Pancreas (tissue), 10 donors: ENCODE measurements at regions of chr4 and their contacts with region 1.

Region 1: GRCh38 chr4:69896530-69897116 is 34.2 kb upstream of the CSN1S1 start:
- DNase-seq: no peak
- ATAC-seq: peak in 1 of 4 donors; percentile 59
- H3K4me3 ChIP-seq: no peak overlapping the region
- H3K27ac ChIP-seq: no peak overlapping the region
- H3K4me1 ChIP-seq: no peaks in the 10 kb centered on the region
- H3K27me3 ChIP-seq: no peaks in the 10 kb centered on the region
- CTCF ChIP-seq: peak in 3 of 4 donors; percentile 5 to 33 (median 29)

Region 2: DNA sequence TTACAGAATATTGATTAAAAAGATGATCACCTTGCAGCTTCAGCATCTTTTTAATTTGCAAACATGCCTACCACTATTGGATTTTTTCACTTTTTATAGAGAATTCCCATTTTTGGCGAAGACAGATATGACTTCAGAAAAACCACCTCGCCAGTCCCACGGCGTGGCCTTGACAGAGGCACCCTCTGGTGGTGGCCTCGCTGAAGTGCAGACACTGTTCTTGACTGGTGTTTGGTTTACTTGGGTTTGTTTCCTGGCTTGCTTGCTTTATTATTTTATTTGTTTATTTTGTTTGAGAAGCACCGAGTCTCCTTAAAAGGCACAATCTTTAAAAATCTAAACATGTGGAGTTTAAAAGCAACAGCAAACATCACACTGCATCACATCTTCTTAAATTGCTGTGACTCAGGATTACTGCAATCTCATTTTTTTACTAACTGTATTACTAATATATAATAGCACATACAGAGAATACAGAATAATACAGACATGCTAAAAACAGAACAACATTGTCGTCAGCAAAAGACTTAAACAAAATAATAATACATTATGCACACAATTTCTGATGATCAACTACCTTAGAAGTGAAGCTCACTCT is 608.6 kb after region 1 on chr4:
- intact Hi-C with region 1: loop called in 1 of 3 experiments (anchors 10 kb)
- DNase-seq: peak; percentile 16 to 85 (median 60)
- ATAC-seq: peak; percentile 69 to 94 (median 90)
- H3K4me3 ChIP-seq: no peak overlapping the region
- H3K27ac ChIP-seq: no peak overlapping the region
- H3K4me1 ChIP-seq: no peaks in the 10 kb centered on the region
- H3K27me3 ChIP-seq: no peaks in the 10 kb centered on the region
- CTCF ChIP-seq: peak; percentile 62 to 90 (median 80)